ENCODE measurements at regions of chr9 and their contacts with region 1.

Region 1: GRCh38 chr9:128249908-128250838 is 25.6 kb downstream of the GOLGA2 start:
- DNase-seq: peak; percentile 96 to 100 (median 98)
- ATAC-seq: peak; percentile 98
- H3K4me3 ChIP-seq: peak overlapping the region; percentile 83
- H3K4me3 Mint-ChIP-seq: peak overlapping the region; percentile 79 to 93 (median 88)
- H3K27ac ChIP-seq: peak overlapping the region; percentile 72
- H3K27ac Mint-ChIP-seq: peak overlapping the region; percentile 60 to 97 (median 95)
- H3K4me1 ChIP-seq: peaks cover 7 to 9% of the 10 kb centered on the region in 2 donors
- H3K4me1 Mint-ChIP-seq: peaks cover 7 to 28% (median 17%) of the 10 kb centered on the region in 7 donors
- H3K27me3 ChIP-seq: no peaks in the 10 kb centered on the region
- H3K27me3 Mint-ChIP-seq: peaks cover 0 to 39% (median 6%) of the 10 kb centered on the region in 5 donors

Region 2: GRCh38 chr9:128117613-128118471 is 132.3 kb before region 1 on chr9:
- CTCF ChIA-PET with region 1: no interaction called
- POLR2A ChIA-PET with region 1: no interaction called
- intact Hi-C with region 1: no loop called
- DNase-seq: peak; percentile 82 to 99 (median 92)
- ATAC-seq: peak; percentile 97
- H3K4me3 ChIP-seq: no peak overlapping the region
- H3K4me3 Mint-ChIP-seq: peak overlapping the region in 4 of 10 donors; percentile 3 to 59 (median 36)
- H3K27ac ChIP-seq: no peak overlapping the region
- H3K27ac Mint-ChIP-seq: peak overlapping the region in 8 of 9 donors; percentile 11 to 88 (median 60)
- H3K4me1 ChIP-seq: peaks cover 0 to 7% of the 10 kb centered on the region in 2 donors
- H3K4me1 Mint-ChIP-seq: peaks cover 6 to 13% (median 7%) of the 10 kb centered on the region in 7 donors
- H3K27me3 ChIP-seq: no peaks in the 10 kb centered on the region
- H3K27me3 Mint-ChIP-seq: no peaks in the 10 kb centered on the region

Region 3: DNA sequence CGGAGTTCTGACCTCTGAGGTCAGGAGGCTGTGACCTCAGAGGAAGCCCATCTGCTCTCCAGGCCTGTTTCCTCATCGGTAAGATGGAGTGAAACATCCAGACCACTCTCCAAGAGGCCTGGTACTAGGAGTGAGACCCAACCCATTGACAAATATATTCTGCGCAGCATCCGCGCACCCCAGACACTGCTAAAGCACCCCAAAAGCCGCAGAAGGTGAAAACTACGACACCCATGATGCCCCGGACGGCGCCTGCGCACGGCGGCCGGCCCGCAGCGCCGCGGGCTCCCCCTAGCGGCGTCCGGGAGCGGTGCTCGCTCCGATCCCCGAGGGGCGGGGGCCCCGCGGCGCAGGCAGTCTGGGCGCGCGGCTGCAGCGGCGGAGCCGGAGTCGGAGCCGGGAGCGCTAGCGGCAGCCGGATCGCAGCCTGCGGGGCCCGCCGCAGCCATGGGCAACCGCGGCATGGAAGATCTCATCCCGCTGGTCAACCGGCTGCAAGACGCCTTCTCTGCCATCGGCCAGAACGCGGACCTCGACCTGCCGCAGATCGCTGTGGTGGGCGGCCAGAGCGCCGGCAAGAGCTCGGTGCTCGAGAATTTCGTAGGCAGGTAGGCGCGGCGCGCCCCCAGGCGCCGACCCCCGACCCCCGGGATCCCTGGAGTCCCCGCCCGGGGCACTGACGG is 47.0 kb before region 1 on chr9 and contains the start of gene DNM1:
- CTCF ChIA-PET with region 1: no interaction called
- POLR2A ChIA-PET with region 1: interaction called, 3 read pairs
- intact Hi-C with region 1: loop called (anchors 1 kb)
- DNase-seq: peak; percentile 50 to 89 (median 80)
- ATAC-seq: peak; percentile 99
- H3K4me3 ChIP-seq: peak within 1 kb of the TSS; percentile 51
- H3K4me3 Mint-ChIP-seq: peak within 1 kb of the TSS; percentile 63 to 83 (median 76)
- H3K27ac ChIP-seq: no peak within 1 kb of the TSS
- H3K27ac Mint-ChIP-seq: peak within 1 kb of the TSS in 7 of 9 donors; percentile 3 to 84 (median 73)
- H3K4me1 ChIP-seq: peaks cover 4 to 8% of the 10 kb centered on the region in 2 donors
- H3K4me1 Mint-ChIP-seq: peaks cover 6 to 14% (median 8%) of the 10 kb centered on the region in 7 donors
- H3K27me3 ChIP-seq: peaks cover 0 to 5% of the 10 kb centered on the region in 2 donors
- H3K27me3 Mint-ChIP-seq: peaks cover 0 to 33% (median 6%) of the 10 kb centered on the region in 5 donors
- total RNA-seq, gene DNM1: 0.24 to 2.0 (median 0.94) TPM

Measured in naive thymus-derived CD4-positive, alpha-beta T cell (primary cell).